ENCODE measurements at regions of chr9 and their contacts with region 1.

Region 1: DNA sequence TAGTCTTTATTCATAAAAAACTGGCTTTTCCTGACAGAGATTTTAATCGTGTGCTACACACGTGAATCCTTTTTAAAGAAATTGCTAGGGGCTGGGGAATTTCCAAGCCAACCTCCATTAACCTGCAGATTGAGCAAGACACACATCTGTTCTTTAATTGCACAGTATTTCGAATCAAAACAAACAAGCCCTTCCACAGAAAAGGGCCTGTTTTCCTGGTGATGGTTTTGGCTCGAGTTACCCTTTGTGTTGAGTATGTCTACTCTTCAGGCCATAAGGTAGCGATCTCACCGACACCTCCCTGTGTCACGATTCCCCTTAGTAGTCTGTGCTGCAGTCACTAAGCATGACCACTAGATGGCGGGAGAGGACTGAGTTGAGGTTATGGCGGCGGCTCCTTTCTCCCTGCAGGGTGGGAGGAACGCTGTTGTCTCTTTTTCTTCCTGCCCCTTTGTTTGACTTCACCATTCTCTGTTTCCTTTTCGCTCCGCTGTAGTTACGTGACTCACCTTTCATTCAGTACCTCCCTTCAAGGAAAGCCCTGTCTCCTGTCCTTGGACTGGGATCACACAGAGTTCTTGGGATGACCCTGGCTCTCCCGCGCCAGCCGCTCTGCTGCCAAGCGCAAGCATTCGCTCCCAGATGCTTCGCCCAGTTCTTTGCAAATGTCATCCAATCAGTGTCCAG is 137.1 kb upstream of the SLC24A2 start:
- DNase-seq: peak; percentile 43
- H3K4me3 ChIP-seq: peak overlapping the region; percentile 60
- H3K27ac ChIP-seq: no peak overlapping the region
- H3K4me1 ChIP-seq: peaks cover 9% of the 10 kb centered on the region
- H3K27me3 ChIP-seq: peaks cover 9% of the 10 kb centered on the region
- CTCF ChIP-seq: peak; percentile 99

Region 2: DNA sequence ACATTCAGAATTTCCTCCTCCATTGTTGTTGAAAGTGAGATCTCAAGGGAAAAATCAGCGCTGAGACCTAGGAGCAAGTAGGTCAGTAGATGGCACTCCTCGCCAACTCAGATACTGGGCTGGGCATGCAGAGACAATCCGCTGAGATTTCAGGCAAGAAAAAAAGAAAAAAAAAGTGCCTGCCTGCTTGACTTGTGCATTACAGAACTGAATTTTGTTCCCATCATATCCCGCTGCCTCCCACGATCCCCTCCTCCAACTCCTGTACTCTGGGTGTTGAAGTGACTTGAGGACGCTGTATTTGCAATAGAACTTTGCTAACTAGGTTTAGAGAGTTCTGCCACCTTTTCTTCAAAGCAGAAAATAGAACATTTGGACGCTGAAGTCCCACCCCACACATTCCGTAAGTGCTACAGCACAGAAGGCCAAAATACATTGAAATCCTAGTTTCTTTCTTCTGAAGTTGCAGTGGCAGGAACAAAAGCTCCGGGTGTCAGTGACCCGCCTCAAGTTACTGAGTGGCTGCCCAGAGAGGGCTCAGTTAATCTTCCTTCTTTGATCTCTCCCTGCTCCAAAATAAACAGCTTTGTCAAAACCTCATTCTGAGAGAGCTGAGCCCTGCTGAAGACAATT is 430.6 kb after region 1 on chr9:
- intact Hi-C with region 1: loop called (anchors 10 kb)
- DNase-seq: peak; percentile 35
- H3K4me3 ChIP-seq: peak overlapping the region; percentile 45
- H3K27ac ChIP-seq: peak overlapping the region; percentile 74
- H3K4me1 ChIP-seq: peaks cover 31% of the 10 kb centered on the region
- H3K27me3 ChIP-seq: no peaks in the 10 kb centered on the region
- CTCF ChIP-seq: peak; percentile 82

Region 3: GRCh38 chr9:20382460-20383071 is 456.6 kb after region 1 on chr9:
- intact Hi-C with region 1: no loop called
- DNase-seq: no peak
- H3K4me3 ChIP-seq: no peak overlapping the region
- H3K27ac ChIP-seq: no peak overlapping the region
- H3K4me1 ChIP-seq: peaks cover 8% of the 10 kb centered on the region
- H3K27me3 ChIP-seq: no peaks in the 10 kb centered on the region
- CTCF ChIP-seq: no peak

Region 4: DNA sequence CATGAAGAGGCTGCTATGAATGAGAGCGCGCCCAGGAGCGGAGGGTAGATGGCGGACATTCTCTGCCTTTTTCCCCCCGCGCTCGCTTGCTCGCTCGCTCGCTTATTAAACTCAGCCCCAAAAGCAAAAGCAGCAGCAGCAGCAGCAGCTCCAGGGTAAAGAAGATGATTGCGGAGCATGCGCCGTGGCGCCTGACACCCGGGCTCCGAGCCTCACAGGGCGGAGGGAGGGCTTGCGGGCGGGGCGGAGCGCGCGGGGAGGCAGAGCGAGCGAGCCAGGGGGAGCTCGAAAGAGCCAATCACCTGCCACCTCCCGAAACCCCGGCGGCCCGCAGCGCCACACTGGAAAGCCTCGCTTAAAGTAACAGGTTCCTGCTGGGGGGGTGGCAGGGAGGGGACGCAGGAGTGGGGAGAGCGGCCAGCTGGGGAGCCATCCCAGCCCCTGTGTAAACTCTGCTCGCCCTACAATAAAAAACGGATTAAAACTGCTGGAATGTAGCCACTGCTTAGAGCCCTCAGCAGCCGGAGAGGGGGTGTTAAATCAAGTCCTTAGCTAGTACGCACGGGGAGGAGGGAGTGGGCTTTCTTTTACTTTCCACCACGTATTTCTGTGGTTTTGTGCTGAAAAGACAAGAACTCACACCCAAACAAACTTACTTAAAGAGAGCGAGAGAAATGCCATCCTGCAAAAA is 696.5 kb after region 1 on chr9 and contains the start of gene MLLT3:
- intact Hi-C with region 1: loop called (anchors 2 kb)
- DNase-seq: peak; percentile 97
- H3K4me3 ChIP-seq: peak within 1 kb of the TSS; percentile 95
- H3K27ac ChIP-seq: peak within 1 kb of the TSS; percentile 95
- H3K4me1 ChIP-seq: peaks cover 63% of the 10 kb centered on the region
- H3K27me3 ChIP-seq: no peaks in the 10 kb centered on the region
- CTCF ChIP-seq: no peak
- total RNA-seq, gene MLLT3: 17.5 TPM

Region 5: GRCh38 chr9:20941174-20941690 is 1015.3 kb after region 1 on chr9:
- intact Hi-C with region 1: loop called (anchors 5 kb)
- DNase-seq: peak; percentile 20
- H3K4me3 ChIP-seq: no peak overlapping the region
- H3K27ac ChIP-seq: no peak overlapping the region
- H3K4me1 ChIP-seq: no peaks in the 10 kb centered on the region
- H3K27me3 ChIP-seq: no peaks in the 10 kb centered on the region
- CTCF ChIP-seq: peak; percentile 89

Region 6: DNA sequence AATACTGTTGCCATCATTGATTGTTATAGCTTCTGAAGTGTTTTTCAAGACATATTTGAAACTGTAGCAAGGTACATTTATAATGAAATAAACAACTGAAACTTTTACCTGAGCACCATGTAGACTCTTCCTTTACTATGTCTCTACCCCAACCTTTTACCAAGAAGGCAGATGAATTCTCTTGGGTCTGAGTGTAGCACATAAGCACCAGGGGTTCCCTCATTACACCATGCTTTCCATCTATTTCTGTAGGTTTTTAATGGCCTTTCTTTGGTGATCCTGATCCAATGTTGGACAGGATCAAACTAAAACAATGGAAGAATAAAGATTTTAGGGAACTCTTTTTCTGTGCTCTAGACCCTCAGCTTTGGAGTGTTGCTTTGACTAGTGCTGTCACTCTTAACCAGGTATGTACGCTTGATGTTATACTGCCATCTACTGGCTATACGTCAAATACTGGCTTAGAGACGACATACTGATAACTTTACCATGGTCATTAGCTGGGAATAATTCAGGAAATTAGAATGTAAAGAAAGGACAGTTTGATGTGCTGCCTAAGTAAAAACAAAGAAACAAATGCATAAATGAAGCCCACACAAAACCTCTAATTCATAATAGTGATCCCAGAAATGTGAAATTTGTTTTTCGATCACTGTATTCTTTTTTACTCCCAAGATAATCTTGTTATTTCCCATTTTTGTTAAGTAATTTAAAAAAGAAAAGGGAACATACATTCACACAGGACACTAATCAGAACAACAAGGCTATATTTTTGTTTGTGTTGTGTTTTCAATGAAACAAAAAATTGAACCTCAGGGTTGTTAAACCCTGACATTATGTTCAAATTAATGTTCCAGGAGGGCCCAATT is 1185.0 kb after region 1 on chr9:
- intact Hi-C with region 1: loop called (anchors 5 kb)
- DNase-seq: no peak
- H3K4me3 ChIP-seq: no peak overlapping the region
- H3K27ac ChIP-seq: no peak overlapping the region
- H3K4me1 ChIP-seq: no peaks in the 10 kb centered on the region
- H3K27me3 ChIP-seq: no peaks in the 10 kb centered on the region
- CTCF ChIP-seq: peak; percentile 89